ENCODE measurements at regions of chr4 and their contacts with region 1.

Region 1: DNA sequence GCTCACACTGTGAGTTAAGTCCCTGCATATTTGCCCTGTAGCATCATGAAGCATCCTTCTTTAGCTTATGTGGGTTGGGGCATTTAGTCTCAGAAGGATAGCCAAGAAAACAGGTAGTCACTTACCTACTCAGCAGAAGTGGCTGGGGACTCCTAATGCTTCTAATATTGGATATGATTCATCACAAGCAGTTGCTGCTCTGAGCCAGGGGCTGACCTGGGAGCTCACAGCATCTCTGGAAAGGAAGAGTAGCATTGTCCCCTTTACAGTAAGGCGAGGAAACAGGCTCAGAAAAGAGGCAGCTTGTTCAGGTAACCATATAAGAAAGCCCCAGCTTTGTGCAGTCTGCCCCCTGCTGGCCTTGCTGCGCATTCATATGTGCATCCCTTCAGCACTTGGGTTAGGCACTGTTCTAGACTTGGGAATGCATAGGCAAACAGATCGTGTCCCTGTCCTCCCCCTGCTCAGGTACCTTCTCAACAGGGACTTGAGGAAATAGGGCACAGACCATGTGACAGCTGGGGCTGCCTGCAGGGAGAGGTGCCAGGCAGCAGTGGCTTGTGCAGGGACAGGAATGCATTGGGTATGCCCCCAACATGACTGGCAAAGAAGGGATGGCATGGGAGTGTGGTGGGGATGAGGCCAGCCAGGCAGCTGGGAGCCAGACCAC is 35.7 kb upstream of the TBC1D14 start:
- DNase-seq: peak; percentile 51
- ATAC-seq: peak; percentile 91
- H3K4me3 ChIP-seq: no peak overlapping the region
- H3K27ac ChIP-seq: no peak overlapping the region
- H3K4me1 ChIP-seq: no peaks in the 10 kb centered on the region
- H3K27me3 ChIP-seq: no peaks in the 10 kb centered on the region
- CTCF ChIP-seq: peak; percentile 78 to 92 (median 86)
- POLR2A ChIP-seq: no peak
- RAD21 ChIP-seq: peak; percentile 82

Region 2: GRCh38 chr4:6568689-6569332 is 305.1 kb before region 1 on chr4:
- CTCF ChIA-PET with region 1: no interaction called
- POLR2A ChIA-PET with region 1: no interaction called
- RAD21 ChIA-PET with region 1: no interaction called
- intact Hi-C with region 1: no loop called
- DNase-seq: peak; percentile 73
- ATAC-seq: peak; percentile 90
- H3K4me3 ChIP-seq: peak overlapping the region; percentile 11 to 42; a peak in 3 of 4 replicates
- H3K27ac ChIP-seq: peak overlapping the region; percentile 42
- H3K4me1 ChIP-seq: peaks cover 12 to 18% of the 10 kb centered on the region in 2 experiments
- H3K27me3 ChIP-seq: no peaks in the 10 kb centered on the region
- CTCF ChIP-seq: no peak
- POLR2A ChIP-seq: no peak
- RAD21 ChIP-seq: no peak

Region 3: DNA sequence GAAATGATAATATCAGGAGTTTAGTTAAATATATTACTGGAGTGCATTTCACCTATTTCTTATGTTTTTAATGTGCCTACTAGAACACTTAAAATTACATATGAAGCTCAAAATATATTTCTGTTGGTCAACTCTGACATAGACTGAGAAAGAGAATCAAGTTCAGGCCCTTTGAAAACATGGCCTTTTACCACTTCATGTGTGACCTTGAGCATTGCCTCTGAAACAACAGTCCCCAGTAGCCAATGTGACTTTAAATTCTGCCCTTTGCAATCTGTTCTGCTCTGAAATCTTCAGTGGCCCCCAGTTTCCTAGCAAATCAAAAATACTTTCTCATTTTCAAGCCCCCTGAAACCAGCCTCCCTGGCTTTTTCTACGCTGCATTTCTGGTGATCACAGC is 14.4 kb before region 1 on chr4:
- CTCF ChIA-PET with region 1: interaction called, 13 read pairs
- POLR2A ChIA-PET with region 1: no interaction called
- RAD21 ChIA-PET with region 1: no interaction called
- intact Hi-C with region 1: no loop called
- DNase-seq: no peak
- ATAC-seq: no peak
- H3K4me3 ChIP-seq: no peak overlapping the region
- H3K27ac ChIP-seq: no peak overlapping the region
- H3K4me1 ChIP-seq: peaks cover 3 to 11% of the 10 kb centered on the region in 2 experiments; a peak in 2 of 4 replicates
- H3K27me3 ChIP-seq: no peaks in the 10 kb centered on the region
- CTCF ChIP-seq: no peak
- POLR2A ChIP-seq: no peak
- RAD21 ChIP-seq: no peak

Region 4: DNA sequence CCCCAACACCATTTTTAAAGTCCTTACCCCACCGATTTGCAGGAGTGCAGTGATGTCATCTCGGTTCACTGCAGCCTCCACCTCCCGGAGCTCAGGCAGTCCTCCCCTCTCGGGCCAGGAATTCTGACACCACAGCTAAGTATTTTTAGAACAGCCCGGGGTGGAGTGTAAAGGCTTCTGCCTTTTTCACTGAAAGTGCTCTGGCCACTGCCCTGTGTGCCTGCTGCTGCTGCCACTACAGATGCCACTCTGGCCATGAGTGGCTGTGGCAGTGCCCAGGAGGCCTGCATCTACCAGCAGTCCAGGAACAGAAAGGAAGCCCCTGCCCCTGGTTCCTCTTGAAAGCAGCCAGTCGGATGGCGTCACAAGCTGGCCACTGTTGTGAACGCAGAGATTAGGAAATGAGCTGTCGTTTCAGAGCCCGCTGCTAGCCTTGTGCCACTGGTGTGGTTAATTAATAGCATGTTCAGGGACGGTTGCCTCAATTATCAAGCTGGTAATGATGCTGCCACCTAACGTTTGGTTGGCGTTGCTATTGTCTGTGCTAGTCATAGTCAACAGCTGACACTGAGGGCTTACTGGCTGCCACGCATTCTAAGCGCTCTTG is 12.1 kb after region 1 on chr4:
- CTCF ChIA-PET with region 1: interaction called, 34 read pairs
- POLR2A ChIA-PET with region 1: no interaction called
- RAD21 ChIA-PET with region 1: no interaction called
- intact Hi-C with region 1: no loop called
- DNase-seq: no peak
- ATAC-seq: peak; percentile 60; the same call in 1 of the 2 replicates
- H3K4me3 ChIP-seq: no peak overlapping the region
- H3K27ac ChIP-seq: no peak overlapping the region
- H3K4me1 ChIP-seq: no peaks in the 10 kb centered on the region
- H3K27me3 ChIP-seq: no peaks in the 10 kb centered on the region
- CTCF ChIP-seq: peak; percentile 8 to 33 (median 27); a peak in 4 of 6 replicates
- POLR2A ChIP-seq: no peak
- RAD21 ChIP-seq: peak; percentile 39; the same call in 1 of the 2 replicates

Region 5: DNA sequence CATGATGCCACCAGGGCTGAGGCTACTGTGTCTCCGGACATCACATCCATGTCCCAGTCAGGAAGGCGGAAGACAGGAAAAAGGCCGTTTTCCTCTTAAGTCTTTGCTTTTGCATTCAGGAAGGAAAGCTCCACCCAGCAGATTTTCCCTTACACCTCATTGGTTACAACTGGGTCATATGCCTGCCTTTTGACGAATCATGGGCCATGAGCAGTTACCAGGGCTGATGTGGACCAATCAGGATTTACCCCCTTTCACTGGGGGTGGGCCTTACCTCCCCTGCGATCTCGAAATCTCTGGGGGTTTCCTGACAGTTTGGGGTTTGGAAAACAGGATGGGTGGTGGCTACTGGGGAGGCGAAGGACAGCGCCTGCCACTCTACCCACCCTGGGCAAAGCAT is 246.4 kb after region 1 on chr4:
- CTCF ChIA-PET with region 1: no interaction called
- POLR2A ChIA-PET with region 1: no interaction called
- RAD21 ChIA-PET with region 1: no interaction called
- intact Hi-C with region 1: no loop called
- DNase-seq: peak; percentile 16
- ATAC-seq: peak; percentile 92
- H3K4me3 ChIP-seq: no peak overlapping the region
- H3K27ac ChIP-seq: no peak overlapping the region
- H3K4me1 ChIP-seq: peaks cover 2 to 6% of the 10 kb centered on the region in 2 experiments; a peak in 2 of 4 replicates
- H3K27me3 ChIP-seq: 0 out of 2 replicates have a peak, but pooled peaks cover 4% of the 10 kb centered on the region
- CTCF ChIP-seq: no peak
- POLR2A ChIP-seq: no peak
- RAD21 ChIP-seq: no peak

Measured in HCT116 (cell line).